Head of caudate nucleus (tissue), 42 donors: ENCODE measurements at regions of chr2 and their contacts with region 1.

Region 1: DNA sequence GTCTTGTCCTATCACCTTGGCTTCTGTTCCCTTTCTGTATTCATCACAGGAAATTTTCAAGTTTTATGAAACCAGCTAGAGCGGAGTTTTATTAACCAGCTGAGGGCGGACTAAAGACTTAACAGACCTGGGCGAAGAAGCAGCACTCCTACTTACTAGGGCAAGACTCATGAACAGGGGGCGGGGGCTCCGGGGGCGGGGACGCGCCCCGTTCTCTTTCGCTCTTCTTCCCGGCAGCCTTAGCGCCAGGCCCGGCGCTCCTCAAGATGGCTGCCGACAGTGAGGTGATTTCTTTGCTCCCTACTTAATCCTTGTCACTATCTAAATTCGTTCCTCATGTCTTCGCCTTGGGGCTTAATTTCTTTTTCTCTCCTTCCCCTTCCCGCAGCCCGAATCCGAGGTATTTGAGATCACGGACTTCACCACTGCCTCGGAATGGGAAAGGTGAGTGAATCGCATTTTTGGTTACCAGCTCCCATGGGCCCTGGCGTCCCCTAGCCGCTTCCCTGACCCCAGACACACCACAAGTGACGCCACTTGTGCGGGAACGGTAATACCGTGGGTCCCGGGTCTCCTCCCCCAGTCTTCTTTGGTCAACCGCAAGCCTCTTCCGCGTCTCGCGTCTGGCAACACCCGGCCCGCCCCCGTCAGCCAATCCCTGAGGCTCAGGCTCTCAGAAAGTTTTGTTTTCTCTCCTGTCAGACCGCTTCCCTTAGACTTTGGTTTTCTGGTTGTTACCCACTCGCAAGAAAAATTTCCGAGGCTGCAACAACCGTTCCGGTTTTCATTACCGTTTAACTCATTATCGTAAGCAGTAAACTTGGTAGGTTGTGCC is at the start of gene RAB3GAP1:
- DNase-seq: peak; percentile 42 to 89 (median 77)

Region 2: GRCh38 chr2:134900151-134900550 is 152.1 kb before region 1 on chr2:
- intact Hi-C with region 1: no loop called
- DNase-seq: no peak

Region 3: DNA sequence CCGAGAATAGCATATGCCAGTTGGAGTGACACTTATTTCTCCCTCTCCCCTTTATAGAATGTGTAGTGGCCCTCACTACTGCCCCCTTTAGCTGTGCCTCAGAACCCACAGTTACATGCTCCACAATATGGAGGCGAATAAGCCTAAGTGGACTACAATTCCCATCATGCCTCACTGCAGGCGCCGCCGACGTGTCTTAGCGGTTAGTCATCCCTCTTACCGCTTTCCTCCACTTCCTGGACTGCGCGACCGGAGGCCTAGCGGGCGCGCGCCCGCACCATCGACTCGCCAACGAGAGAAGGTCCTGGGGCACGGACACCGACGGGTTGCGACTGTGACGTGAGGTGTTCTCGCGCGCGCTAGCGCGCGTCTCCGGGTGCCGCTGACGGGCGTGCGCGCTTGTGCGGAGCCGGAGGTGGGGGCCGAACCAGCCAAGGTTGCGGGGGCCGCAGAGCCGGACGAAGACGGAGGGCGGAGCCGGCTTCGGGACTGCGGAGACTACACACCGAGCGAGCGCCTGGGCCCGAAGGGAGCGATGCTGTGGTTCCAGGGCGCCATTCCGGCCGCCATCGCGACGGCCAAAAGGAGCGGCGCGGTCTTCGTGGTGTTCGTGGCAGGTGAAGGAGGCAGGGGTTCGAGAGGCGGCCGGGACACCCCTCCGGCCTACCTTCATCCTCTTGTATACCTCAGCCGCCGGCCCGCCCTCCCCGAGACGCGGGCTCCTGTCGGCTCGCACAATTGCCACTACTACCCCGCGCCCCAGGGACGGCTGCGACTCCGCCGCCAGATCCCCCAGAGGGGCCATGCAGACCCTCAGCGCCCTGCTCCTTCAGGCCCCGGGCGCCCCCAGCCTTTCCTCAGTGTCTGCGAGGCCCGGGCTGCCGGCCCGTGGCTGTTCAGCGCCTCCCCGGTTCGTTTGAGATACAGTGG is 689.4 kb after region 1 on chr2 and contains the start of gene UBXN4:
- intact Hi-C with region 1: loop called (anchors 5 kb)
- DNase-seq: peak; percentile 91 to 99 (median 97)